AG04450 (cell line): ENCODE measurements at regions of chr11 and their contacts with region 1.

Region 1: DNA sequence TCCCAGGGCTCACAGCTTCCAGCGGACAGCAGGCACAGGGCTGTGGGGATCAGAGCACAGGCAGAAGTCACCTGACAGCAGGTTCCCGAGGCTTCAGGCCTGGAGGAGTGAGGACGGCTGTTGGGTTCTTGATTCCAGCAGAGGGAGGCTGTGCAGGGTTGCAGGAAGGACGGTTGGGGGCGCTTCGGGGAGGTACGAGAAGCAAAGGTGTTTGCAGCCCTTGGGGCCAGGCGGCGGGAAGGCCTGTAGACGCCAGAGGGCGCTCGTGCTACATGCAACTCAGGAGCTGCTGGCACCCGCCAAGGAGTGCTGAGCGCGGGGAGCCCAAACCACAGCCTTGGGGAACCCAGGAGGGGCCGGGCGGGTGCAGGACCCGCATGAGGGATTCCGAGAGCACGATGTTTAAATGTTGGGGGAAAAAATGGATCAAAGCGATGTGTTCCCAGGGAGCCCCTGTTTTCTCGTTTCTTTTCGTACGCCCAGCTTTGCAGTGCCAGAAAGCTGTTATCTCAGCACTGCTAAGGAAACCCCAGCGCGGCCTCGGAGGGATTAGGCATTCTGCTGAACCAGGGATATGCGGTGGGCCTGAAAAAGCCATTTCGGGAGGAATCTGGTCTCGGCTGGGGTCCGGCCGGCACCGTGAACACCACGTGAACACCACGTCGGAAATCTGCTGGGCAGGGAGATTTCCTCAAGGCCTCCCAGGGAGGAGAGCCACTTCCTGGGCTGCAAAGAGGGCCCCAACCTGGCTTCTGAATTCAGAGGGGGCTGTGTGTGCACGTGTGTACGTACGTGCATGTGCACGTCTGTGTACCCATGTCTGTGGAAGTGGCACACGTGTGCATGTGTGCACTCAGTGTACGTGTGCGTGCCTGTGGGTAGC is 88.1 kb downstream of the KCNQ1 start:
- DNase-seq: peak; percentile 84
- H3K4me3 ChIP-seq: no peak overlapping the region
- H3K27ac ChIP-seq: peak overlapping the region; percentile 97
- H3K27me3 ChIP-seq: peaks cover 4% of the 10 kb centered on the region
- CTCF ChIP-seq: peak; percentile 99

Region 2: DNA sequence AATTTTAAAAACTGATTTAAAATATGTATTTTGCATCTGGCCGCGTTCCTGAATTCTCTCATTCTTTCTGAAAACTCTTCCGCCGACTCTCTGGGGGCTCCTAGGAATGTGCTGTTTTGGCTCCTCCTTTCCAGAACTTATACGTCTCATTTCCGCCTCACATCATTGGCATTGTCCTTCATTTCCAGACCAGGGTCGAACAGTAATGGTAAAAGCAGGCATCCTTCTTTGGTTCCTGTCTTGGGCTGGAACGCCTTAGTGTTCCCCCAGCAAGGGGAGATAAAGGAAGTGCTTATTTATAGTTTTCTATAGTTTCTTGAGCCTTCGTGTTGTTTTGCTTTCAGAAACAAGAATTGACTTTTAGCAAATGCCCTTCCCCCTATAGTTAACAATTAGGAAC is 624.3 kb before region 1 on chr11:
- CTCF ChIA-PET with region 1: no interaction called
- POLR2A ChIA-PET with region 1: no interaction called
- DNase-seq: no peak
- H3K4me3 ChIP-seq: no peak overlapping the region
- H3K27ac ChIP-seq: no peak overlapping the region
- H3K27me3 ChIP-seq: peaks cover 14% of the 10 kb centered on the region
- CTCF ChIP-seq: no peak

Region 3: GRCh38 chr11:2355000-2355644 is 177.8 kb before region 1 on chr11:
- CTCF ChIA-PET with region 1: no interaction called
- POLR2A ChIA-PET with region 1: no interaction called
- DNase-seq: no peak
- H3K4me3 ChIP-seq: no peak overlapping the region
- H3K27ac ChIP-seq: peak overlapping the region; percentile 39
- H3K27me3 ChIP-seq: peaks cover 6% of the 10 kb centered on the region
- CTCF ChIP-seq: no peak

Region 4: GRCh38 chr11:2428322-2428795 is 104.6 kb before region 1 on chr11:
- CTCF ChIA-PET with region 1: interaction called, 38 read pairs
- POLR2A ChIA-PET with region 1: no interaction called
- DNase-seq: no peak
- H3K4me3 ChIP-seq: no peak overlapping the region
- H3K27ac ChIP-seq: no peak overlapping the region
- H3K27me3 ChIP-seq: peaks cover 4% of the 10 kb centered on the region
- CTCF ChIP-seq: peak; percentile 83

Region 5: GRCh38 chr11:2586087-2586792 is 53.3 kb after region 1 on chr11:
- CTCF ChIA-PET with region 1: no interaction called
- POLR2A ChIA-PET with region 1: no interaction called
- DNase-seq: no peak
- H3K4me3 ChIP-seq: no peak overlapping the region
- H3K27ac ChIP-seq: no peak overlapping the region
- H3K27me3 ChIP-seq: peaks cover 20% of the 10 kb centered on the region
- CTCF ChIP-seq: no peak

Region 6: GRCh38 chr11:2609345-2609744 is 76.4 kb after region 1 on chr11:
- CTCF ChIA-PET with region 1: no interaction called
- POLR2A ChIA-PET with region 1: no interaction called
- DNase-seq: no peak
- H3K4me3 ChIP-seq: no peak overlapping the region
- H3K27ac ChIP-seq: no peak overlapping the region
- H3K27me3 ChIP-seq: no peaks in the 10 kb centered on the region
- CTCF ChIP-seq: no peak

Region 7: DNA sequence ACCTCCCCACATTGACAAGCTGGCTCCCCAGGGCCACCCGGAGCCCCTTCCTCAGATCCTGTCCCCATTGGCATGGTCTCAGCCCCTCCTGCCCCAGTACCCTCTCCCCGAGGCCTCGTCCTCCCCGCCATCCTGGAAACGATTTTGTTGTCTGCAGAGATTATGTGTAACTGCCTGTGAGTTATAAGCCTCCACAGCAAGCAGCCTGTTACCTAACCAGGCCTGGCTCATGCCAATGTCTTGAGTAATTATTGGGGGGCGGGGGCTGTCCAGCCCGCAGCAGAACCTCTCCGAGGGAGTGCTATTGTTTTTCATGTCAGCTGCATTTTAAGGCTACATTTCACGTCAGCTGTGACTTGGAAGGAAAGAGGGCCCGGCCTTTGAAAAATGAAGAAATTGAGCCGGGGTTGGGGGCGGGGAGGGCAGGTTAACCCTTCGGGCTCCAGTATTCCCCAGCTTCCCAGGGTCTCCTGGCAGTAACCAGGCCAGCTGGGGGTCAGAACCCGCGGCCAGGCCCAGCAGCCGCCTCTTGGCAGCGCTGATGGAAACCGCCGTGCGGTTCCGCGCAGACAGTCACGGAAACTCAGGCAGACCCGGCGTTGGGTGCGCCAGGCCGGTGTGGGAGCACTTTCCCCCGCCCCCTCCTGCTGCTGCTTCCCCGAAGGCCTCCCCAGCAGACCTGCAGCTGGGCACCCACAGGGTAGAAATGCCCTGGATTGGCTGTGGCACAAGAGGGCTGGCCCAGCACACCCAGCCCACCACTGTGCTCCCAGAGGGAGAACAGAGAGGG is 293.1 kb after region 1 on chr11:
- CTCF ChIA-PET with region 1: interaction called, 10 read pairs
- POLR2A ChIA-PET with region 1: no interaction called
- DNase-seq: peak; percentile 91
- H3K4me3 ChIP-seq: peak overlapping the region; percentile 43
- H3K27ac ChIP-seq: peak overlapping the region; percentile 99
- H3K27me3 ChIP-seq: no peaks in the 10 kb centered on the region
- CTCF ChIP-seq: no peak

Region 8: GRCh38 chr11:2885676-2886081 is 352.7 kb after region 1 on chr11 and contains the start of gene CDKN1C:
- CTCF ChIA-PET with region 1: interaction called, 403 read pairs
- POLR2A ChIA-PET with region 1: interaction called, 46 read pairs
- DNase-seq: no peak
- H3K4me3 ChIP-seq: peak within 1 kb of the TSS; percentile 69
- H3K27ac ChIP-seq: peak within 1 kb of the TSS; percentile 21
- H3K27me3 ChIP-seq: peaks cover 11% of the 10 kb centered on the region
- CTCF ChIP-seq: no peak
- polyA plus RNA-seq, gene CDKN1C: 6.3 and 8.1 TPM in 2 replicates

Region 9: DNA sequence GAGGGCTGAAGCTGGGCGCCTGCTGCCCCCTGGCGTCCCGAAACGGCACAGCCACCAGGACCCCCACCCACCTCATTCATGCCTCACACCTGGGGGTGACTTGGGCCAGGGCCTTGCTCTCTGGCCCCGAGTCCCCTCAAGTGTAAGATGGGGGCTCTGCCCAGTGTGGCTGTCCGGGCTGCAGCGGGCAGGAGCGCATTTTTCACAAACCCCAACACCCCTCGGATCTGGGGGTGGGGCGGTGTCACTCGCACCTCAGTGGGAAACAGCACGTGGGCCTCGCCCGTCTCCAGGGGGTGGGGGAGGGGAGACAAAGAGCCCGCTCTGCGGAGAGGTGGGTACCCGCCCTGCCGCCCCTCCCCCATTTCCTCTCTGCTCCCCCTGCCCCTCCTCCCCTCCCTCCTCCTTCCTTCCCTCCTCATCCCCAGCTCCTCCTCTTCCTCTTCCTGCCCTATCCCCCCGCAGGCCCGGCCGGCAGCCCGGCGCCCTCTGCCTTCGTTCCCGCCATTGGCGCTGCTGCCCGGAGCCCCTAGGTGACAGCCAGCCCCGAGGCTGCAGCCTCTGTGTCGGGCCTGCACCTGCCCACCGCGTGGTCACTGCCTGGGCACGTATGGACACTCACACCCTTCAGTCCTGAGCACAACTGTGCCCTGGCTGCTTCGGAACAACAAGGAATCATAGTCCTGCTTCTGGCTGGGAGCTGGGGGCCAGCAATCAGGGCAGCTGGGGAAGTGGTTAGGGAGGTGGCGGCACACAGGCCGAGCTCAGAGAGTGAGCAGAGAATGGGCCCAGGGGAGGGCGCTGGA is 359.5 kb after region 1 on chr11:
- CTCF ChIA-PET with region 1: interaction called, 403 read pairs
- POLR2A ChIA-PET with region 1: interaction called, 46 read pairs
- DNase-seq: no peak
- H3K4me3 ChIP-seq: peak overlapping the region; percentile 63
- H3K27ac ChIP-seq: peak overlapping the region; percentile 61
- H3K27me3 ChIP-seq: no peaks in the 10 kb centered on the region
- CTCF ChIP-seq: peak; percentile 91

Region 10: GRCh38 chr11:2930704-2931428 is 397.9 kb after region 1 on chr11:
- CTCF ChIA-PET with region 1: interaction called, 11 read pairs
- POLR2A ChIA-PET with region 1: interaction called, 10 read pairs
- DNase-seq: no peak
- H3K4me3 ChIP-seq: peak overlapping the region; percentile 77
- H3K27ac ChIP-seq: peak overlapping the region; percentile 92
- H3K27me3 ChIP-seq: no peaks in the 10 kb centered on the region
- CTCF ChIP-seq: no peak; the same call in none of the 2 replicates